ENCODE measurements at regions of chr9 and their contacts with region 1.

Region 1: DNA sequence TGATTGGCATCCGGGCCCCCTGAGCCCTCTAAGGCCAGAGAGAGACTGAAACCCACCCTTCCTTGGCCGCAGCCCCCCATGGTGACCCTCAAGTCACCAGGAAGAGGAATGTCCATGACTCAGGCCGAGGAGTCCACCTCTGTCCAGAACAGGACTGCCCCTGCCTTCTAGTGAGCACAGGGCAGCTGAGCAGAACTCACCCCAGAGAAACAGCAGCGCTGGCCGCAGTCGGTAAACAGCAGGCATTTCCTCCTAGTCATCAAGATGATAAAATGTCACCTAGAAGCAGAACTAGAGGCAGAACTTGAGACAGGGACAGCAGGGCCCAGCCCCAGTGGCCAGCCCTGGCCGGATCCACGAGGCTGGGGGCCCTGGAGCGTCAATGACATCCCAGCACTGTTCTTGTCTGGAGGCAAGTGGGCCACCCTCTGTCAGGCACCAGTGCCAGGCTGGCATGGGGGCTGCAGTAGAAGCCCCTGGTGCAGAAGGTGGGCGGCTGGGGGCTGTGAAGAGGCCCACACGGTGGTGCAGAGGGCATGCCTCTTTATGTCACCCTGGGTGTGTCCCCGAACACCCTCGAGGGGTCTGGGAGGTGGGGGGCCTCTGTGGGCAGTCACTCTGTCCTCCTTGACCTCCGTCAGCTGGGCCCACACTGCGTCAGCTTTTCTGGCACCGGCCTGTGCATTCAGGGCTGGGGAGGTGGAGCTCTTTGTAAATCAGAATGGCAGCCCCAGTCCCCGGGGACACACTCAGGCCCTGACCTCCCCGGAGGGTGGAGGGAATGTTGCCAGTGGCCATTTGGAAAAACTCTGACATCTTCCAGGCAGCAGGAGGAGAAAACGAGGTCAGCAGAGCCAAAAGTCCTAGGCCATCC is 83.0 kb downstream of the NTNG2 start:
- DNase-seq: no peak
- ATAC-seq: no peak
- H3K4me3 ChIP-seq: no peak overlapping the region
- H3K27ac ChIP-seq: no peak overlapping the region
- H3K4me1 ChIP-seq: peaks cover 0 to 6% (median 0%) of the 10 kb centered on the region in 4 donors
- H3K27me3 ChIP-seq: no peaks in the 10 kb centered on the region
- CTCF ChIP-seq: no peak
- POLR2A ChIP-seq: no peak

Region 2: DNA sequence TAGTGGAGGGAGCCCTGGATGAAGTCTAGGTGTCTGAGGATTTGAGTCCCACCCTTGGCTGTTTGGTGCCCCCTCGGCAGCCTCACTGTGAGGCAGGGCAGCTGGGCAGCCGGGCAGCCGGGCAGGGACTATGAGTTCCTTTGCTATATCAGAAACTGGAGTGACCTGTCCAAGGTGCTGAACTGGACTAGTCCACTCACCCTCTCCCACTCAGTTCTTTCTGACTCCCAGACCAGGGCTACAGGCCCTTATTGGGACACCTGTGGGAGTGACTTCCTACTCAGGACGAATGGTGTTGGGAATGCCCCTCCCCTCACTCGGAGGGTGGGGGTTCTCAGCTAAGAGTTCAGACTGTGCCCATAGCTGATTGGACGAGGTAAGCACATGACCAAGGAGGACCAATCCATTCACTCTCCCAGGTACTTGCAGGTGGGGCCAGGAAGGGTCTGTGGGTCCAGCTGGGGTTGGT is 470.9 kb before region 1 on chr9:
- intact Hi-C with region 1: loop called in 1 of 2 experiments (anchors 5 kb)
- DNase-seq: peak in 2 of 3 donors; percentile 47 to 54
- ATAC-seq: peak; percentile 48 to 77 (median 66)
- H3K4me3 ChIP-seq: no peak overlapping the region
- H3K27ac ChIP-seq: no peak overlapping the region
- H3K4me1 ChIP-seq: no peaks in the 10 kb centered on the region
- H3K27me3 ChIP-seq: no peaks in the 10 kb centered on the region
- CTCF ChIP-seq: no peak
- POLR2A ChIP-seq: no peak

Region 3: GRCh38 chr9:132301521-132301920 is 56.7 kb after region 1 on chr9:
- intact Hi-C with region 1: no loop called
- DNase-seq: no peak
- ATAC-seq: no peak
- H3K4me3 ChIP-seq: no peak overlapping the region
- H3K27ac ChIP-seq: no peak overlapping the region
- H3K4me1 ChIP-seq: no peaks in the 10 kb centered on the region
- H3K27me3 ChIP-seq: no peaks in the 10 kb centered on the region
- CTCF ChIP-seq: no peak
- POLR2A ChIP-seq: no peak

Measured in right lobe of liver (tissue), 6 donors.